ENCODE measurements at regions of chr11 and their contacts with region 1.

Region 1: GRCh38 chr11:56624661-56625110 is 10.0 kb upstream of the OR5M1 start:
- DNase-seq: peak; percentile 27
- H3K4me3 ChIP-seq: no peak overlapping the region
- H3K27ac ChIP-seq: no peak overlapping the region
- H3K4me1 ChIP-seq: no peaks in the 10 kb centered on the region
- H3K27me3 ChIP-seq: no peaks in the 10 kb centered on the region
- CTCF ChIP-seq: peak; percentile 42

Region 2: GRCh38 chr11:56196705-56197104 is 428.0 kb before region 1 on chr11:
- intact Hi-C with region 1: no loop called
- DNase-seq: no peak
- H3K4me3 ChIP-seq: no peak overlapping the region
- H3K27ac ChIP-seq: no peak overlapping the region
- H3K4me1 ChIP-seq: no peaks in the 10 kb centered on the region
- H3K27me3 ChIP-seq: no peaks in the 10 kb centered on the region
- CTCF ChIP-seq: no peak

Region 3: DNA sequence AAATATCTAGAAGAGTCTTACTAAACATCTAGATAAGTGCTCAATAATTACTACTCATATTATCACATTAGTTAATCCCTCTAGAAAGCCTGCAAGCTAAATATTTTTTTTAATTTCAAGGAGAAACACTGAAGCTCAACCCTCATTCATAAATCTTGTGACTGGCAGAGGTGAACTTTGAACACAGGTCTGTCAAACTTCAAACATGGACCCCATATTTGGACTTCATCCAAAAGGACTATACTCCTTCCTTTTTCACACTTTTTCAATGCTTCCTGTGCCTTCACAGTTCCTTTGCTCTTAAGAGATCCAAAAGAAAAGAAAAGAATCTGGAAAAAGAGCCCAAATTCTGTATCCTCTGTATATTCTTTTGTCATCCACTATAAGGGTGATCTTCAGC is 152.1 kb after region 1 on chr11:
- intact Hi-C with region 1: loop called (anchors 5 kb)
- DNase-seq: no peak
- H3K4me3 ChIP-seq: no peak overlapping the region
- H3K27ac ChIP-seq: no peak overlapping the region
- H3K4me1 ChIP-seq: no peaks in the 10 kb centered on the region
- H3K27me3 ChIP-seq: no peaks in the 10 kb centered on the region
- CTCF ChIP-seq: no peak

Measured in colonic mucosa (tissue), 4 donors.